Breast epithelium (tissue), 4 donors: ENCODE measurements at regions of chr5 and their contacts with region 1.

Region 1: GRCh38 chr5:58054014-58054413 is 405.9 kb downstream of the PLK2 start:
- DNase-seq: no peak
- H3K4me3 ChIP-seq: no peak overlapping the region
- H3K27ac ChIP-seq: no peak overlapping the region
- H3K4me1 ChIP-seq: no peaks in the 10 kb centered on the region
- H3K27me3 ChIP-seq: no peaks in the 10 kb centered on the region
- CTCF ChIP-seq: no peak
- POLR2A ChIP-seq: no peak

Region 2: DNA sequence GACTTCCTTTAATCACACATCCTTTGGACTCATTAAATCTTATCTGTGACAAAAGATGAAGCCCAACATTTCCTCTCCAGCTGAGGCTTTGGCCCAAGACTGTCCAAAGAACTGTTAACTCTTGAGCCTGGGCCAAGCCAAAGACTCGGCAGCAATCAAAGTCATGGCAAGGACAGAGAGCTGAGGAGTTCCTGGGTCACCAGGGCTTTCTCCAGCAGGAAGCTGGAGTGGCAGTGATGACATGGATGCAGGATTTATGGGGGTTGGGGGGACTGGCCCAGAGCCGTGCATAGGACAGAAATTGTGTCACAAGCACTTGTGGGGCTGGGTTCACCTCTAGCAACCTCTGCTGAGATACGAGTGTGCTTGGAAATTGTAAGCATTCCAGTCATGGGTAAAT is 34.4 kb before region 1 on chr5:
- intact Hi-C with region 1: loop called (anchors 2 kb)
- DNase-seq: no peak
- H3K4me3 ChIP-seq: no peak overlapping the region
- H3K27ac ChIP-seq: peak overlapping the region in 1 of 2 donors; percentile 48
- H3K4me1 ChIP-seq: no peaks in the 10 kb centered on the region
- H3K27me3 ChIP-seq: no peaks in the 10 kb centered on the region
- CTCF ChIP-seq: no peak
- POLR2A ChIP-seq: no peak

Region 3: DNA sequence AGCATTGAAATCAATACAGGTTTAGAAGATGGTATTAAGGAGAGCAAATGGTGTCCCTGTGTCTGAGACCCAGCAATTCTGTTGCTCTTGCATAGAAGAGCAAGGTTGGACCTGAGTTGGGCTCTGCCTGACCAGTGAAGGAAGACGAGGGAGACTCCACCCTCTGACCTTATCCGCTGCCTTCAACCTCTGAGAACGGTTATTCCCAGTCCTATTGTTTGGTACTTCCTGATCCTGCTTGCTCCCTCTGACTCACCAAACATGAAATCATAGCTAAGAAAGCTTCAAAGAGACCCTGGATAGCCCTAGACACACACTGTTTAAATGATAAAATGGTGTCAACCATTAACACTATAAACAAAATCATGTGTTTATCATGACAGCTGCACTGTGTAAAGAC is 187.4 kb after region 1 on chr5:
- intact Hi-C with region 1: no loop called
- DNase-seq: no peak
- H3K4me3 ChIP-seq: no peak overlapping the region
- H3K27ac ChIP-seq: no peak overlapping the region
- H3K4me1 ChIP-seq: no peaks in the 10 kb centered on the region
- H3K27me3 ChIP-seq: no peaks in the 10 kb centered on the region
- CTCF ChIP-seq: no peak
- POLR2A ChIP-seq: no peak

Region 4: GRCh38 chr5:58595952-58596351 is 541.9 kb after region 1 on chr5:
- intact Hi-C with region 1: no loop called
- DNase-seq: no peak
- H3K4me3 ChIP-seq: no peak overlapping the region
- H3K27ac ChIP-seq: no peak overlapping the region
- H3K4me1 ChIP-seq: no peaks in the 10 kb centered on the region
- H3K27me3 ChIP-seq: no peaks in the 10 kb centered on the region
- CTCF ChIP-seq: no peak
- POLR2A ChIP-seq: no peak

Region 5: DNA sequence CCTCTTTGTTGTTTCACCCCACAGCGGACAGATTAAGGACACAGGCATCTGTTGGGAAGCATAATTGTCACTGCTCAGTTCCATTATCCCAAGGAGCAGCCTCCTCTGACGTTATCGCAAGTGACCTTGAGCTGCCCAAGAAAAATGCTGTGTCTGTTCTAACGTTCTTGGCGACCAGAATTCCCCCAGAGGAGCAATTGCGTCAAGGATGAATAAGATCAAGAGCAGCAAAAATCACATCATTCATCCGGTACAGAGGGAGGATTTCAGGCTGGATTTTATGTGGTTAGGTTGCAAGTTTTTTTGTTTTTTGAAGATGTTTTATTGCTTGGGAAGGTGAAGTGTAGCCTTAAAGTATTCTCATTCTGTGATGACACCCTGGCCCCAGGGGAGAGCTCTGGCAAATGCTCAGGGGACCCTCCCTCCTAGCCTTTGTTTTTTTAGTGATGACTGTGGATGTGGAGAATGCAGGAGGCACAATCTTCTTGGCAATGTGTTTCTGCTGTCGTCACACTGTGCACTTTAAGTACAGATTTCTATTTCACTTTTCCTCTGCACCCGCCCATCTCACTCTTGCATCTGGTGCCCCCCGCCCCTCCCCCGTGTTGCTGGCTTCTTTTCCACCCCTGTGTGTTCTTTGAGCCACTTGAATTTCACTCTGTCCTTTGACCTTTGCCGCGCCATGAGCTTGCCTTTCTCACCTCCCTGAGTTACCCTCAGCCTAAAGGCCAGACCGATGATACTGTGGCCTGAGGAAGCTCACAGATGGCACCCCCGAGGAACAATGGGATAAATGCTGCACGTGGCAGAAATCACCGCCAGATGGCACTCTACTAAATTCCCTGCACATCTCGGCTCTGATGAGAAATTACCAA is 837.3 kb after region 1 on chr5:
- intact Hi-C with region 1: no loop called
- DNase-seq: peak; percentile 37 to 59
- H3K4me3 ChIP-seq: peak overlapping the region in 1 of 3 donors; percentile 32
- H3K27ac ChIP-seq: peak overlapping the region; percentile 40
- H3K4me1 ChIP-seq: no peaks in the 10 kb centered on the region
- H3K27me3 ChIP-seq: no peaks in the 10 kb centered on the region
- CTCF ChIP-seq: peak; percentile 25 to 58 (median 45)
- POLR2A ChIP-seq: no peak